T-cell (primary cell): ENCODE measurements at regions of chr16 and their contacts with region 1.

Region 1: GRCh38 chr16:57325458-57325857 is 33.1 kb upstream of the CCL22 start:
- DNase-seq: no peak
- ATAC-seq: no peak
- H3K4me3 ChIP-seq: no peak overlapping the region
- H3K4me3 Mint-ChIP-seq: no peak overlapping the region
- H3K27ac ChIP-seq: no peak overlapping the region
- H3K27ac Mint-ChIP-seq: peak overlapping the region in 1 of 2 donors; percentile 36
- H3K4me1 ChIP-seq: no peaks in the 10 kb centered on the region
- H3K4me1 Mint-ChIP-seq: no peaks in the 10 kb centered on the region
- H3K27me3 ChIP-seq: peaks cover 0 to 2% of the 10 kb centered on the region in 2 experiments
- H3K27me3 Mint-ChIP-seq: no peaks in the 10 kb centered on the region

Region 2: DNA sequence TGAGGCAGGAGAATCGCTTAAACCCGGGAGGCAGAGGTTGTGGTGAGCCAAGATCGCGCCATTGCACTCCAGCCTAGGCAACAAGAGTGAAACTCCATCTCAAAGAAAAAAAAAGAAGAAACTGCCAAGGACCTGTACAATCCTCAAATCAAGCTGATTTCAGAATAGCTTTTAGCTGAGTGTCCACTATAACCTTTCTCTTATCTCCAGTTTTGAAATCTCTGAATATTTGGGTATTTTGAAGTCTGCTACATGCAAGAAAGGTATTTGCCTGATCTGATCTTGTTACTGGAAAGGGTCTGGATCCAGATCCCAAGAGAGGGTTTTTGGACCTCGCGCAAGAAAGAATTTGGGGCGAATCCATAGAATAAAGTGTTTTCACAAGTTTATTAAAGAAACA is 99.5 kb before region 1 on chr16:
- CTCF ChIA-PET with region 1: interaction called in 1 of 2 experiments, 11 read pairs
- POLR2A ChIA-PET with region 1: no interaction called
- DNase-seq: no peak
- ATAC-seq: no peak
- H3K4me3 ChIP-seq: no peak overlapping the region
- H3K4me3 Mint-ChIP-seq: no peak overlapping the region
- H3K27ac ChIP-seq: no peak overlapping the region
- H3K27ac Mint-ChIP-seq: no peak overlapping the region
- H3K4me1 ChIP-seq: no peaks in the 10 kb centered on the region
- H3K4me1 Mint-ChIP-seq: peaks cover 0 to 1% (median 0%) of the 10 kb centered on the region in 3 donors
- H3K27me3 ChIP-seq: no peaks in the 10 kb centered on the region
- H3K27me3 Mint-ChIP-seq: no peaks in the 10 kb centered on the region

Region 3: DNA sequence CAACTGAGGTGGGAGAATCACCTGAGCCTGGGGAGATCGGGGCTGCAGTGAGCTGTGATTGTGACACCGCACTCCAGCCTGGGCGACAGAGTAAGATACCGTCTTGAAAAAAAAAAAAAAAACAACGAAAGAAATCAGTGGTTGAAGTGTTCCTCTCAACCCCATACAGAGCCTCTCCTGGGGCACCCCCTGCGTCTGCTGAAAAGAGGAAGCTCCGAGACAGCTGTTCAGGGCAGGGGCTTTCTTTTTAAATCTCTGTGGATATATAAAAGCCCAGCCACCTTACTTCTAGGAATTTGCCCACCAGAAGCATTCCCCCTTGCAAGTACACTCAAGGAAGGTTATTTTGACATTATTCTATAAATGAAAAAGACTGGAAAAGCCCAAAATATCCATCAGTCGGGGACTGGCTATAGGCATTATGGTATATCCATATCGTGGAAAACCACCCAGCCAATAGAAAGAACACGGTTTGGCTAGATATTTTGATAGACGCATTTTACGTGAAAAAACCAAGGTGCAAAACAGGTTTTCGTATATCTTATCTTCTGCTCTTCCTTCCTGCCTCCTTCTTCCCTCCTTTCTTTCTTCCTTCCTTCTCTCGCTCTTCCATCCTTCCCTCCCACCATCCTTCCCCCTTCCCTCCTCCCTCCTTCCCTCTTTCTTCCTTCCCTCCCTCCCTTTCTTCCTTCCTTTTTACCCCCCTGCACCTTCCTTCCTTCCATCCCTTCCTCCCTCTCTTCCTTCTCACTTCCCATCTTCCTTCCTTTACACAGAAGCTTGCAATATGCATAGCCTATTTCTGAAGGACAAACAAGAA is 24.0 kb after region 1 on chr16:
- CTCF ChIA-PET with region 1: interaction called in 1 of 2 experiments, 13 read pairs
- POLR2A ChIA-PET with region 1: no interaction called
- DNase-seq: peak in 22 of 35 experiments; percentile 5 to 59 (median 18)
- ATAC-seq: peak in 2 of 4 experiments; percentile 63 to 92
- H3K4me3 ChIP-seq: no peak overlapping the region
- H3K4me3 Mint-ChIP-seq: peak overlapping the region in 2 of 3 donors; percentile 9 to 27
- H3K27ac ChIP-seq: no peak overlapping the region
- H3K27ac Mint-ChIP-seq: no peak overlapping the region
- H3K4me1 ChIP-seq: peaks cover 6 to 10% of the 10 kb centered on the region in 2 experiments
- H3K4me1 Mint-ChIP-seq: peaks cover 19 to 33% (median 25%) of the 10 kb centered on the region in 3 donors
- H3K27me3 ChIP-seq: peaks cover 0 to 15% of the 10 kb centered on the region in 2 experiments
- H3K27me3 Mint-ChIP-seq: peaks cover 29 to 41% of the 10 kb centered on the region in 2 donors